K562 (cell line): ENCODE measurements at regions of chr1 and their contacts with region 1.

Region 1: GRCh38 chr1:237386362-237387143 is 344.6 kb downstream of the RYR2 start:
- DNase-seq: peak; percentile 20 to 37 (median 30)
- ATAC-seq: peak; percentile 71
- H3K4me3 ChIP-seq: no peak overlapping the region
- H3K27ac ChIP-seq: no peak overlapping the region
- H3K4me1 ChIP-seq: no peaks in the 10 kb centered on the region
- H3K27me3 ChIP-seq: no peaks in the 10 kb centered on the region
- CTCF ChIP-seq: peak; percentile 42 to 76 (median 62); a peak in 5 of 6 replicates
- EP300 ChIP-seq: no peak
- POLR2A ChIP-seq: no peak
- RAD21 ChIP-seq: peak; percentile 86

Region 2: DNA sequence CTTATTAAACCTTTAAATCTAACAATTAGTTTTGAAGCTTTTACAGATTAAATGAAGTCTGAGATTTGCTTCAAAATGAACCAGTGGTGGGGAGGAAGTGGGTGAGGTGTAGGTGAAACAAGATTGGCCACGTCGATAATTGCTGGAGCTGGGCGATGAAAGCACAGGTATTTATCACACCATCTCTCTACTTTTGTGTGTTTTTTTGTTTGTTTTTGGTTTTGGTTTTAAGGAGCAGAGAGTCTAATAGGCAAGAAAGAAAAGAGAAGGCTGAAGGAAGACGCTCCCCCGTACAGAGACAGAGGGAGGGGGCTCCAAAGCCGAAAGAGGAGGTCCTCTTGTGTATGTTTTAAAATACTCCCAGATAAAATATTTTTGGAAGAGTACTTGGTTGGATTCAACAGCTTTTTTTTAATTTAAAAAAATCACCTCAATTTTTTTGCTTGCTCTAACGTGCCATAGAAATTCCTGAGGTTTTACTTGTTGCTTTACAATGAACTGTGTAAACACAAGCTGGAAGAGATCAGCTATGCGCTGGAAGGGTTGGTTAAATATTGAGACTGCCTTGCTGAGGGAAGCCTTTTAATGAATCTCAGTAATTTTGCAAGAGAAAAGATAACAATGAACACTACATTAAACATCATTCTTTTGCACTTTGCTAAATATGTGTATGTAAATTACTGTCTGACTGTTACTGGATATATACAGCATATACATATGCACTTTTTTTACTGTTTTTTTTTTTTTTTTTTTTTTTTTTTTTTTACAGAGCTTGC is 869.4 kb before region 1 on chr1:
- CTCF ChIA-PET with region 1: no interaction called
- POLR2A ChIA-PET with region 1: no interaction called
- in situ Hi-C with region 1: no loop called
- intact Hi-C with region 1: loop called (anchors 10 kb)
- DNase-seq: no peak
- ATAC-seq: peak; percentile 26; the same call in 2 of the 3 replicates
- H3K4me3 ChIP-seq: no peak overlapping the region
- H3K27ac ChIP-seq: no peak overlapping the region
- H3K4me1 ChIP-seq: no peaks in the 10 kb centered on the region
- H3K27me3 ChIP-seq: no peaks in the 10 kb centered on the region
- CTCF ChIP-seq: no peak
- EP300 ChIP-seq: no peak
- POLR2A ChIP-seq: no peak
- RAD21 ChIP-seq: no peak

Region 3: DNA sequence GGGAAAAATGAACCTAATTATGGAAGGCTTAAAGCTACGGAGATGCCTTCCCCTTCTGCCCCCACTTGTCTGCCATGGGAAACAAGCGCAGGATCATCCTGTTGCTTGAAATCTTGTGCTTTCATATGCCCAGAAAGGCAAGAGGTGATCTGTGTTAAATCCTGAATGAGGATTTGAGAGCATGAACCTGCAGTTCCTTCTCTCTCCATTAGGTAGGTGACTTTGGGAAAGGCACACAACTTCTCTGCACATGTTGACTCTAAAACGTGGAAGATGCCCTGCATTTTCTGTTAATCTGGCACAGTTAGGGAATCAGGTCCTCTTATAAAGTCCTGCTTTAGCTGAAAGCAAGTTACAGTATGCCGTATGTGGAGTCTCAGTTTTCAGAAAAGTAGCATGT is 638.1 kb before region 1 on chr1:
- CTCF ChIA-PET with region 1: no interaction called
- POLR2A ChIA-PET with region 1: no interaction called
- in situ Hi-C with region 1: loop called (anchors 25 kb)
- intact Hi-C with region 1: loop called (anchors 2 kb)
- DNase-seq: no peak
- ATAC-seq: peak; percentile 69
- H3K4me3 ChIP-seq: no peak overlapping the region
- H3K27ac ChIP-seq: no peak overlapping the region
- H3K4me1 ChIP-seq: peaks cover 4% of the 10 kb centered on the region in 2 experiments; a peak in 3 of 5 replicates
- H3K27me3 ChIP-seq: peaks cover 18 to 37% of the 10 kb centered on the region in 2 experiments
- CTCF ChIP-seq: peak; percentile 6 to 28 (median 22); a peak in 2 of 6 replicates
- EP300 ChIP-seq: no peak
- POLR2A ChIP-seq: no peak
- RAD21 ChIP-seq: no peak

Region 4: GRCh38 chr1:236952246-236953003 is 434.1 kb before region 1 on chr1:
- CTCF ChIA-PET with region 1: no interaction called
- POLR2A ChIA-PET with region 1: no interaction called
- in situ Hi-C with region 1: no loop called
- intact Hi-C with region 1: loop called (anchors 5 kb)
- DNase-seq: no peak
- ATAC-seq: no peak
- H3K4me3 ChIP-seq: no peak overlapping the region
- H3K27ac ChIP-seq: no peak overlapping the region
- H3K4me1 ChIP-seq: no peaks in the 10 kb centered on the region; a peak in 1 of 5 replicates
- H3K27me3 ChIP-seq: peaks cover 19 to 45% of the 10 kb centered on the region in 2 experiments
- CTCF ChIP-seq: no peak
- EP300 ChIP-seq: no peak
- POLR2A ChIP-seq: no peak
- RAD21 ChIP-seq: no peak